ENCODE measurements at regions of chr5 and their contacts with region 1.

Region 1: GRCh38 chr5:158910782-158911692 is 188.7 kb downstream of the EBF1 start:
- DNase-seq: no peak
- ATAC-seq: peak; percentile 88
- H3K4me3 ChIP-seq: no peak overlapping the region
- H3K27ac ChIP-seq: peak overlapping the region; percentile 50
- H3K4me1 ChIP-seq: peaks cover 32% of the 10 kb centered on the region
- H3K27me3 ChIP-seq: no peaks in the 10 kb centered on the region
- CTCF ChIP-seq: no peak
- EP300 ChIP-seq: peak; percentile 29 to 85; a peak in 2 of 4 replicates
- POLR2A ChIP-seq: no peak
- RAD21 ChIP-seq: no peak

Region 2: GRCh38 chr5:158619083-158619788 is 291.8 kb before region 1 on chr5:
- CTCF ChIA-PET with region 1: no interaction called
- POLR2A ChIA-PET with region 1: no interaction called
- RAD21 ChIA-PET with region 1: no interaction called
- SMC1A ChIA-PET with region 1: no interaction called
- in situ Hi-C with region 1: no loop called
- intact Hi-C with region 1: no loop called
- DNase-seq: no peak
- ATAC-seq: no peak
- H3K4me3 ChIP-seq: no peak overlapping the region
- H3K27ac ChIP-seq: no peak overlapping the region
- H3K4me1 ChIP-seq: no peaks in the 10 kb centered on the region
- H3K27me3 ChIP-seq: no peaks in the 10 kb centered on the region
- CTCF ChIP-seq: no peak
- EP300 ChIP-seq: no peak
- POLR2A ChIP-seq: no peak
- RAD21 ChIP-seq: no peak

Region 3: GRCh38 chr5:158888206-158888605 is 22.8 kb before region 1 on chr5:
- CTCF ChIA-PET with region 1: interaction called, 3 read pairs
- POLR2A ChIA-PET with region 1: interaction called, 7 read pairs
- RAD21 ChIA-PET with region 1: interaction called, 16 read pairs
- SMC1A ChIA-PET with region 1: interaction called, 331 read pairs
- in situ Hi-C with region 1: no loop called
- intact Hi-C with region 1: no loop called
- DNase-seq: no peak
- ATAC-seq: no peak
- H3K4me3 ChIP-seq: no peak overlapping the region
- H3K27ac ChIP-seq: no peak overlapping the region
- H3K4me1 ChIP-seq: peaks cover 11% of the 10 kb centered on the region
- H3K27me3 ChIP-seq: no peaks in the 10 kb centered on the region
- CTCF ChIP-seq: no peak
- EP300 ChIP-seq: no peak
- POLR2A ChIP-seq: no peak
- RAD21 ChIP-seq: no peak

Region 4: GRCh38 chr5:158898185-158899177 is 12.6 kb before region 1 on chr5:
- CTCF ChIA-PET with region 1: interaction called, 8 read pairs
- POLR2A ChIA-PET with region 1: interaction called, 7 read pairs
- RAD21 ChIA-PET with region 1: interaction called, 15 read pairs
- SMC1A ChIA-PET with region 1: interaction called, 331 read pairs
- in situ Hi-C with region 1: no loop called
- intact Hi-C with region 1: loop called (anchors 1 kb)
- DNase-seq: no peak
- ATAC-seq: peak; percentile 82
- H3K4me3 ChIP-seq: 0 out of 2 replicates have a peak overlapping the region, but pooled peaks have one; percentile 15
- H3K27ac ChIP-seq: peak overlapping the region; percentile 83
- H3K4me1 ChIP-seq: peaks cover 14% of the 10 kb centered on the region
- H3K27me3 ChIP-seq: no peaks in the 10 kb centered on the region
- CTCF ChIP-seq: no peak
- EP300 ChIP-seq: peak; percentile 70 to 74; a peak in 3 of 4 replicates
- POLR2A ChIP-seq: no peak
- RAD21 ChIP-seq: no peak

Measured in GM12878 (cell line).